AG04449 (cell line): ENCODE measurements at regions of chr7 and their contacts with region 1.

Region 1: GRCh38 chr7:130961128-130961601 is 227.2 kb upstream of the KLF14 start:
- DNase-seq: peak; percentile 57
- H3K4me3 ChIP-seq: peak overlapping the region; percentile 45
- CTCF ChIP-seq: no peak

Region 2: GRCh38 chr7:130904031-130904757 is 57.0 kb before region 1 on chr7:
- CTCF ChIA-PET with region 1: interaction called, 14 read pairs
- POLR2A ChIA-PET with region 1: interaction called, 58 read pairs
- DNase-seq: peak; percentile 91
- H3K4me3 ChIP-seq: peak overlapping the region; percentile 36
- CTCF ChIP-seq: no peak

Region 3: DNA sequence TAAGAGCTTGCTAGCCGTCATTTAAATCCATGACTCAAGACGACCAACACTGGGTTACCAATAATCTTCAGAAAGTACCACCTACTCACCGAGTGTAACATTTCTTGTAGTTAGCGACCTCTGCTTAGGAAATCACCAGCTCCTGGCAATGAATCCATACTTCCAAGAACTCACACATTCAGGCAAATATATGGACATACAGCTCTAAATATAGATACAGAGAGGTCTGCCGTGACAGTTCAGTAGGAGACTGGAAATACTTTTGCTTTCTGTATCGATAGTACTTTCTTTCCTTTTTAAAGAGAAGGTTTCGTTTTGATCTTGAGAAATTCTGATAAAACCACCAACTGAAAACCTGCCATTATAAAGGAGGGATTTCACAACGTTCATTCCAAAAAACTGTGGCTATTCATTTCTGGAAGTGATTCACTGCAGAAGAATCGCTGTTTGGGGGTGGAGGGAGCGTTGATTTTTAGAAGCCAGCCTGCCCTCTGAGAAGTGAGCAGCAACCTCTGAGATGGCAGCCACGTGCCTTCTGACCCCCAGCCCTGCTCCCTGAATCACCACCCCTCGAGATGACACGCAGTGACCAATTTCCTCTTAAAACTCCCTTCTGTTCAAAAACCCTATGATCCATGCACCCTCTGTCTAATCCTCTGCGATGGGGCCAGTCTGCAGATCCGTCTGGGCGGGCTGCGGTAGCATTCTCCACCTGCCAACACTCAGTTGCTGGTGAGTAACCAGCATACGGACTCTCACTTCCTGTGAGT is 48.1 kb before region 1 on chr7:
- CTCF ChIA-PET with region 1: interaction called, 9 read pairs
- POLR2A ChIA-PET with region 1: interaction called, 58 read pairs
- DNase-seq: peak; percentile 93
- H3K4me3 ChIP-seq: peak overlapping the region; percentile 86
- CTCF ChIP-seq: no peak

Region 4: GRCh38 chr7:130941322-130942210 is 19.6 kb before region 1 on chr7:
- CTCF ChIA-PET with region 1: interaction called, 76 read pairs
- POLR2A ChIA-PET with region 1: interaction called, 3 read pairs
- DNase-seq: no peak
- H3K4me3 ChIP-seq: peak overlapping the region; percentile 43
- CTCF ChIP-seq: no peak

Region 5: GRCh38 chr7:130982160-130982638 is 21.0 kb after region 1 on chr7:
- CTCF ChIA-PET with region 1: interaction called, 44 read pairs
- POLR2A ChIA-PET with region 1: no interaction called
- DNase-seq: no peak
- H3K4me3 ChIP-seq: no peak overlapping the region
- CTCF ChIP-seq: peak; percentile 63

Region 6: DNA sequence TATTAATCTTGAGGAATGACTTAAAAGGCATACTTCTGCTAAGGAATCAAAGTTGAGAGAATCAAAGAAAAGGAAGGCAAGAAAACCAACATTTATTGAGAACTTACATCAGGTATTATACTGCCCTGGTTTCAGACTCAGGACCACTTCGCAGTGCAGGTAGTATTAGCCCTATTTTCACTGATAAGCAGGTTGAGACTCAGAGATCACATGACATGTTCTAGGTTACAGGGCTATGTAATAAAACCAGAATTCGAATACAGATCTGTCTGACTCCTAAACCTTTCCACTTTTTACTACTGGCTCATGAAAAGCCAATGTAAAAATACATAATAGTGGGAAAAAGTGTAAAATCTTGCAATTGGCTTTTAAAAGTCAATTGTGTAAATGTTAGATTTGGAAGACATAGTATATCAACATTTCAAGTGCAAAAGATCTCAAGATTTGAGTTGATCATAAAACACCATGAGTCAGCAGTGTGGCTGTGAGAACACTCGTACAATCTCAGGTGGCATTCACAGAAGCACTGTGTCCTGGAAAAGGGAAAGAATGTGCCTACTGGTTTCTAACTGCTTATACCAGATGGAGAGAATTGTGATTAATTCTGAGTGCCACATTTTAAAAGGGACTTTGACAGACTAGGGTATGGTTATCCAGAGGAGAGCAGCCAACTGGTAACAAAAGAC is 170.7 kb after region 1 on chr7:
- CTCF ChIA-PET with region 1: no interaction called
- POLR2A ChIA-PET with region 1: no interaction called
- DNase-seq: no peak
- H3K4me3 ChIP-seq: no peak overlapping the region
- CTCF ChIP-seq: no peak